GM12878 (cell line): ENCODE measurements at regions of chr20 and their contacts with region 1.

Region 1: DNA sequence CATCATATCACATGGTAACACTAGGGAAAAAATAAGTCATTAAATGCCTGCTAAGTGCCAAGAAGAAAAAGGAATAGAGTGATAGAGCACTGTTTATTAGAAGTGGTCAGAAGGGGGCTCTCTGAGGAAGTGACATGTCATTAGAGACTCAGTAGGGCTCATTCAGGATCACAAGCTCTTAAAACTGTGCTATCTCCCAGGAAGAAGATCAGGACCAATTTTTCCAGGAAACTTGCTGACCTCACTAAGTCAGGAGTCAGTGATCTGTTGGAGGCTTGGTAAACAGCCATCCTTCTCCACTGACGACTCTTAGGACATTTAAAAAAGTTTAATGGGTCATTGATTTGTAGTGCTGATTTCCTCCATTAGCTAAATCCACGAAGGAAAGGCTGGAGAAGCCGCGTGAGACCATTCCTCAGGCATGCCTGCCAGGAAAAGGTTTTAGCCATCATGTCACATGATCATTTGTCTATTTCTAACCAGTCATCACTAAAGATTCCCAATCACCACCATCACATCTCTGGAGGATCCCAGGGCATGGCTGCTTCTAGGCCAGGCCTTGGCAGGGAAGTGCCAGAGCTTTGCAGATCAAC is 5.9 kb upstream of the PTPN1 start:
- DNase-seq: no peak
- ATAC-seq: peak; percentile 64
- H3K4me3 ChIP-seq: no peak overlapping the region
- H3K27ac ChIP-seq: no peak overlapping the region
- H3K4me1 ChIP-seq: peaks cover 29% of the 10 kb centered on the region
- H3K27me3 ChIP-seq: no peaks in the 10 kb centered on the region
- CTCF ChIP-seq: peak; percentile 21 to 43 (median 21); a peak in 3 of 6 replicates
- EP300 ChIP-seq: no peak
- POLR2A ChIP-seq: no peak
- RAD21 ChIP-seq: peak; percentile 49; the same call in 1 of the 2 replicates

Region 2: GRCh38 chr20:48841847-48842529 is 1662.3 kb before region 1 on chr20:
- CTCF ChIA-PET with region 1: no interaction called
- POLR2A ChIA-PET with region 1: no interaction called
- RAD21 ChIA-PET with region 1: no interaction called
- SMC1A ChIA-PET with region 1: no interaction called
- in situ Hi-C with region 1: no loop called
- intact Hi-C with region 1: no loop called
- DNase-seq: no peak
- ATAC-seq: no peak
- H3K4me3 ChIP-seq: no peak overlapping the region
- H3K27ac ChIP-seq: no peak overlapping the region
- H3K4me1 ChIP-seq: peaks cover 37% of the 10 kb centered on the region
- H3K27me3 ChIP-seq: no peaks in the 10 kb centered on the region
- CTCF ChIP-seq: no peak
- EP300 ChIP-seq: no peak
- POLR2A ChIP-seq: no peak
- RAD21 ChIP-seq: no peak

Region 3: GRCh38 chr20:50478162-50479036 is 25.9 kb before region 1 on chr20:
- CTCF ChIA-PET with region 1: interaction called, 15 read pairs
- POLR2A ChIA-PET with region 1: interaction called, 29 read pairs
- RAD21 ChIA-PET with region 1: interaction called, 5 read pairs
- SMC1A ChIA-PET with region 1: interaction called, 2,799 read pairs
- in situ Hi-C with region 1: no loop called
- intact Hi-C with region 1: no loop called
- DNase-seq: no peak
- ATAC-seq: peak; percentile 99
- H3K4me3 ChIP-seq: no peak overlapping the region
- H3K27ac ChIP-seq: no peak overlapping the region
- H3K4me1 ChIP-seq: peaks cover 21% of the 10 kb centered on the region
- H3K27me3 ChIP-seq: no peaks in the 10 kb centered on the region
- CTCF ChIP-seq: peak; percentile 60 to 87 (median 84)
- EP300 ChIP-seq: no peak
- POLR2A ChIP-seq: no peak
- RAD21 ChIP-seq: peak; percentile 79

Region 4: DNA sequence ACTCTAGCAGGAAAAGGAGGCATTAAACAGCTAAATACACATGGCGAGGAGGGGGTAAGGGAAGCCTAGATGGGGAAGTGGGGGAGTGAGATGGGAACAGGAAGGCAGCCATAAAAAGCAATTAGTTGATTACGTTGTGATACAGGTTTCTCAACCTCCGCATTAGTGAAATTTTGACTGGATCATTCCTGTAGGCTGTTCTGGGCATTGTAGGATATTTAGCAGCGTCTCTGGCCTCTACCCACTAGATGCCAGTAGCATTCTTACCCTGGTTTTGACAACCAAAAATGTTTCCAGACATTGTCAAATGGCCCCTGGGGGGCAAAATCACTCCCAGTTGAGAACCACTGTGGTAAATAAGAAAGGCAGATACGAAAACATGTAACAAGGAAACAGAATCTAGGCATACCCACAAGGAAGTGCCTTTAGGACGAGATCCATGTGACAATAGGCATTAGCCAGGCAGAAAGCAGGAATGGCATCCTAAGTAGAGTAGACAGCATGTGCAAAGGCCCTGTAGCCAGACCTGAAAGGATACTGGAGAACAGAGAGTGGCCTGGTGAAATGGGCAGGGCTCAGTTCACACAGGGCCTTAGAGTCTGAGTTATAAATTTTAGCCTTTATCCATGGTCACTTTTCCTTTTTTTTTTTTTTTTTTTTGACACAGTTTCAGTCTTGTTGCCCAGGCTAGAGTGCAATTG is 19.9 kb before region 1 on chr20:
- CTCF ChIA-PET with region 1: interaction called, 30 read pairs
- POLR2A ChIA-PET with region 1: interaction called, 29 read pairs
- RAD21 ChIA-PET with region 1: interaction called, 16 read pairs
- SMC1A ChIA-PET with region 1: interaction called, 2,799 read pairs
- in situ Hi-C with region 1: no loop called
- intact Hi-C with region 1: no loop called
- DNase-seq: no peak
- ATAC-seq: no peak
- H3K4me3 ChIP-seq: no peak overlapping the region
- H3K27ac ChIP-seq: peak overlapping the region; percentile 54
- H3K4me1 ChIP-seq: peaks cover 30% of the 10 kb centered on the region
- H3K27me3 ChIP-seq: no peaks in the 10 kb centered on the region
- CTCF ChIP-seq: no peak
- EP300 ChIP-seq: no peak
- POLR2A ChIP-seq: no peak
- RAD21 ChIP-seq: peak; percentile 36; the same call in 1 of the 2 replicates

Region 5: DNA sequence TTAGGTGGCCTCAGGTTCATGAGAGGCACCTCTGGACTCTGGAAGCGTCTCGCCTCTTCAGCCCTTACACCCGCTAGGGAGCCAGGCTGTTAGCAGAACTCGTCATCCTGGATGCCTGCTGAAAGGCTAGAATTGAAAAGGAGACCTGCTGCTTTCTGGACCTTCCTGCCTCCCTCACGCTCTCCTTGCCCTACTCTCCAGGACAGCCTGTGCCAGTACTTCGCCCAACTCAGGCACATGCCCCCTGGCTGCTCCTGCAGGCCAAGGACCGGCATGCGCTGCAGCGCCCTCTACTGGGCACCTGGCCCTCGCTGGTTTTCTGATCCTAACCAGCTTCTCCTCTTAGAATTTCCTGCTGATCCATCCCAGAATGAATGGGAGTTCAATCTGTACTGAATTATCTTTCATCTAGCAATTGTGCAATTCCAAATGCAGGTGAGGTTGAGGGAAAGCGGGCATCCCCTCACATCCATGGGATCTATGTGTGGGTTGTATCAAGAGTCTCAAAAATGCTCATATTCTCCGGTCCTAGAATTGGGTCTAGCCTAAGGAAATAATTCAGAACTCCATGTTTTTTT is 83.8 kb after region 1 on chr20:
- CTCF ChIA-PET with region 1: interaction called, 36 read pairs
- POLR2A ChIA-PET with region 1: interaction called, 4 read pairs
- RAD21 ChIA-PET with region 1: no interaction called
- SMC1A ChIA-PET with region 1: interaction called, 3 read pairs
- in situ Hi-C with region 1: no loop called
- intact Hi-C with region 1: no loop called
- DNase-seq: no peak
- ATAC-seq: peak; percentile 84
- H3K4me3 ChIP-seq: no peak overlapping the region
- H3K27ac ChIP-seq: no peak overlapping the region
- H3K4me1 ChIP-seq: no peaks in the 10 kb centered on the region
- H3K27me3 ChIP-seq: no peaks in the 10 kb centered on the region
- CTCF ChIP-seq: peak; percentile 86 to 97 (median 93)
- EP300 ChIP-seq: no peak
- POLR2A ChIP-seq: no peak; the same call in none of the 2 replicates
- RAD21 ChIP-seq: peak; percentile 55